Activated T-helper 2 cell treated with anti-CD3 and anti-CD28 coated beads, Interferon-gamma antibody, Interleukin-2, Interleukin-4, amounts not matched to agents 10 μg/mL and 5 μg/mL and 100 μg/mL, durations not matched to agents 14 hours and 24 hours and 36 hours (primary cell): ENCODE measurements at regions of chr13 and their contacts with region 1.

Region 1: DNA sequence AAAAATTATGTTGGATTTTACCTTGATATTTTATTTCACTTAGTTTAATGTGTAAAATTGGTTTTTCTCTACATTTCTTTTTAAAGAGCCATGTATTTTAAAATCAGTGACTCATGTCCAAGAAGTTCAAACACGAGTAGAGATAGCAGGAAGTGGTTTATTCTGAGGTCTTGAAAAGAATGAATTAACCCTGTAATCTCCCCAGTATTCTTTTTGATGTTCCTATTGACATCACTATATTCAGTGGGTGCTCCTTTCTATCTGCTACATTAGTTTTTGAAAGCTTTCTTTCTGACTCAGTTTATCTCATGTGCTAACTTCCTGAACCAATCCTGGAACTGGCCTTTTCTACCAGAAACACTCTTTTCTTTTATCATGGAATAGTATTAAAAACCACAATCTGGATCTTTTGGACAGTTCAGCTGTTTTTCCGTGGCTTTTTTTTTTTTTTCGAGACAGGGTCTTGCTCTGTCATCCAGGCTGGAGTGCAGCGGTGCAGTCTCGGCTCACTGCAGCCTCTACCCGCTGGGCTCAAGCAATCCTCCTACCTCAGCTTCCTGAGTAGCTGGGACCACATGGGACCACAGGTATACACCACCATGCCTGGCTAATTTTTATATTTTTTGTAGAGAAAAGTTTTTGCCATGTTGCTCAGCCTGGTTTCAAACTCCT is 114.9 kb downstream of the PCCA start:
- DNase-seq: no peak
- H3K4me3 Mint-ChIP-seq: peak overlapping the region; percentile 52
- H3K27ac Mint-ChIP-seq: peak overlapping the region; percentile 35
- H3K4me1 Mint-ChIP-seq: peaks cover 17% of the 10 kb centered on the region
- H3K27me3 Mint-ChIP-seq: peaks cover 6% of the 10 kb centered on the region

Region 2: DNA sequence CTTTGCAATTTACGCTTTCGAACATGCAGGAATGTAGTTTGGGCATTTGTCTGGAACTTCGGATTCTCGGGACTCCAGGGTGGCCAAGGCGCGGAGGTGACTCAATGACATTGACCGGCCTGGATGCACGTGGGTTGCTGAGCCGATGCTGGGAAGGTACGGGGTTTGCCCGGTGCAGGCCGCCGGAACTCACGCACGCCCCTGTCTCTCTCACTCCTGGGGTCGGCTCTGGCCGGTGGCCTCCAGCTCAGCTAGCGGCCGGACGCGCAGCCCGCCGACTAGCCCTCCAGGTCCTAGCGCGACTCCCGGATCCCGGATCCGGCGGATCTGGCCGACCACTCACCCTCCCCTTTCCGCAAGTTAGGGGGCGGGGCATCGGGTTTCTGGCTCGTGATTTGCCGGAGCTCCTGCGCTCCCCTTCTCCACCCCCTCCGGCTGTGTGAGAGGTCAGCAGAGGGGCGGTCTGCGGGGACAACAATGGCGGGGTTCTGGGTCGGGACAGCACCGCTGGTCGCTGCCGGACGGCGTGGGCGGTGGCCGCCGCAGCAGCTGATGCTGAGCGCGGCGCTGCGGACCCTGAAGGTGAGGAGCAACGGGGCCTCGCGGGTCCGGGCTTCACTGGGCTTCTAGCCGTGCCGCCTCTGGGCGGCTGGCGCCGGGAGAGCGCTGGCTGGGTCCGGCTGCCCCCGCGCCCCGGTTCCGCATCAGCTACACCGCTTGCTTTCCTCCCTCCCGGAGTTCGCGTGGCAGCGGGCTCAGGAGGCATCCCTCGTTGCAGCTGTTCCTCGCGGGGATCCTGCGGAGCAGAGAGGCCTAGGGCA is 115.0 kb before region 1 on chr13 and contains the start of gene PCCA:
- intact Hi-C with region 1: loop called (anchors 5 kb)
- DNase-seq: peak; percentile 69
- H3K4me3 Mint-ChIP-seq: peak within 1 kb of the TSS; percentile 91
- H3K27ac Mint-ChIP-seq: peak within 1 kb of the TSS; percentile 68
- H3K4me1 Mint-ChIP-seq: peaks cover 16% of the 10 kb centered on the region
- H3K27me3 Mint-ChIP-seq: no peaks in the 10 kb centered on the region
- total RNA-seq, gene PCCA: 6.7 and 7.1 TPM in 2 replicates

Region 3: GRCh38 chr13:100129605-100130004 is 74.2 kb before region 1 on chr13:
- intact Hi-C with region 1: loop called (anchors 10 kb)
- DNase-seq: no peak
- H3K4me3 Mint-ChIP-seq: no peak overlapping the region
- H3K27ac Mint-ChIP-seq: peak overlapping the region; percentile 18
- H3K4me1 Mint-ChIP-seq: peaks cover 26% of the 10 kb centered on the region
- H3K27me3 Mint-ChIP-seq: no peaks in the 10 kb centered on the region

Region 4: GRCh38 chr13:100214886-100215285 is 11.1 kb after region 1 on chr13:
- intact Hi-C with region 1: no loop called
- DNase-seq: no peak
- H3K4me3 Mint-ChIP-seq: no peak overlapping the region
- H3K27ac Mint-ChIP-seq: no peak overlapping the region
- H3K4me1 Mint-ChIP-seq: peaks cover 9% of the 10 kb centered on the region
- H3K27me3 Mint-ChIP-seq: no peaks in the 10 kb centered on the region